Endothelial cell of umbilical vein (primary cell): ENCODE measurements at regions of chr17 and their contacts with region 1.

Region 1: GRCh38 chr17:55513885-55514591 is 2.8 kb upstream of the SMIM36 start:
- DNase-seq: peak; percentile 73
- H3K4me3 ChIP-seq: no peak overlapping the region
- H3K27ac ChIP-seq: no peak overlapping the region
- H3K4me1 ChIP-seq: no peaks in the 10 kb centered on the region
- H3K27me3 ChIP-seq: peaks cover 1 to 19% of the 10 kb centered on the region in 2 experiments
- CTCF ChIP-seq: peak; percentile 77 to 82
- POLR2A ChIP-seq: no peak

Region 2: DNA sequence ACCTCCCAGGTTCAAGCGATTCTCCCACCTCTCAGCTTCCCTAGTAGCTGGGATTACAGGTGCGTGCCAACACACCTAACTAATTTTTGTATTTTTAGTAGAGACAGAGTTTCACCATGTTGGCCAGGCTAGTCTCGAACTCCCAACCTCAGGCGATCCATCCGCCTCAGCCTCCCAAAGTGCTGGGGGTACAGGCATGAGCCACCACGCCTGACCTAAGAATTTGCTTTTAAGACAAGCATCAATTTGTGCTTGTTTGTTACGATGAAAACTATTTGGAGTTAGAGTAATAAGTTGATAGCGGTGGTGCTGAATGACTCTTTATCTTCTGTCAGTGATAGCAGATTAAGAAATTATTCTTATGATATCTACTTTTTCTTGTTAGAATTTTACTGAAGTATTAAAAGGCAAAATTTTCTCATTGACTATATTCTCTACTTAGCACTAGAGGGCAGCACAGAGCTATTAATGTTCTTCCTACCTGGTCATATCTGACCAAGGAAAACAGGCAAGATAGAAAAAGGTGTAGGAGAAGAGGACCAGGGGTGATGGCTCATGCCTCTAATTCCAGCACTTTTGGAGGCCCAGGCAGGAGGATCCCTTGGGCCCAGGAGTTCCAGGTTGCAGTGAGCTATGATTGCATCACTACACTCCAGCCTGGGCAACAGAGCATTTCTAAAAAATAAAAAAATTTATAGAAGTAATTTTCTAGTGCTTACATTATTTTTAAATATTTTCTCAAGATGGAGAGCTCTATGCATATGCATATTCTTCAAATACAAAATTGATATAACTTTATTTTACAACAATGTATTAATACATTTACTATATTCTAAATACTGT is 521.0 kb before region 1 on chr17:
- CTCF ChIA-PET with region 1: interaction called, 6 read pairs
- POLR2A ChIA-PET with region 1: no interaction called
- dilution Hi-C with region 1: no loop called
- intact Hi-C with region 1: loop called (anchors 1 kb)
- DNase-seq: peak; percentile 43
- H3K4me3 ChIP-seq: no peak overlapping the region
- H3K27ac ChIP-seq: no peak overlapping the region
- H3K4me1 ChIP-seq: no peaks in the 10 kb centered on the region
- H3K27me3 ChIP-seq: no peaks in the 10 kb centered on the region
- CTCF ChIP-seq: peak; percentile 39 to 40
- POLR2A ChIP-seq: no peak

Region 3: DNA sequence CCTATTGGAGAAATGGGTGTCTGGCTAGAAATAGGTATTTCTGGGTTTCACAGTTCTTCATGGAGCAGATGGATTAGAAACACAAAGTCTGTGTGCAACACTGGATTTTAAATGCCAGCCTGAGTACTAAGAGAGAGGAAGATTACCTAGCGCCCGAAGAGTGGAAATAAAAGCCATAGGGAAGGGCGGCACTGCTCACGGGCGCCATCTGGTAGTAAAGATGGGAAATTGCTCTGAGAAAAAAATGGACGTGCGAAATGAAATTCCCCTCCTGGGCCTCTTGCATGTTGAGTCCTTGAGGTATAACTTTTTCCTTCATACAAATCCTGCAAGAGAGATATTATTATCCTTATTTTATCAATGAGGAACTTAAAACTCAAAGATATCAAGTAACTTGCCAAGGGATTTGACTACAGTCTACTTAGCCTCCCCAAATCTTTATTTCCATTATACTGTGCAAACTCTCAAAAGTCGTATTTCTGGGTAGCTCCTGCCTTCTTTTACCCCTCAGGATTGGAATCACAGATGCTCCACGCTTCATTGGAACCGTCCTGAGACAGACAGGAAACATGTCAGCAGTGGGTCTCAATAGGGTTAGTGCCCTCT is 165.2 kb before region 1 on chr17:
- CTCF ChIA-PET with region 1: interaction called, 82 read pairs
- POLR2A ChIA-PET with region 1: no interaction called
- dilution Hi-C with region 1: loop called (anchors 10 kb)
- intact Hi-C with region 1: loop called (anchors 2 kb)
- DNase-seq: peak; percentile 56
- H3K4me3 ChIP-seq: no peak overlapping the region
- H3K27ac ChIP-seq: no peak overlapping the region
- H3K4me1 ChIP-seq: no peaks in the 10 kb centered on the region
- H3K27me3 ChIP-seq: peaks cover 6 to 7% of the 10 kb centered on the region in 2 experiments
- CTCF ChIP-seq: peak; percentile 62 to 84
- POLR2A ChIP-seq: no peak

Region 4: DNA sequence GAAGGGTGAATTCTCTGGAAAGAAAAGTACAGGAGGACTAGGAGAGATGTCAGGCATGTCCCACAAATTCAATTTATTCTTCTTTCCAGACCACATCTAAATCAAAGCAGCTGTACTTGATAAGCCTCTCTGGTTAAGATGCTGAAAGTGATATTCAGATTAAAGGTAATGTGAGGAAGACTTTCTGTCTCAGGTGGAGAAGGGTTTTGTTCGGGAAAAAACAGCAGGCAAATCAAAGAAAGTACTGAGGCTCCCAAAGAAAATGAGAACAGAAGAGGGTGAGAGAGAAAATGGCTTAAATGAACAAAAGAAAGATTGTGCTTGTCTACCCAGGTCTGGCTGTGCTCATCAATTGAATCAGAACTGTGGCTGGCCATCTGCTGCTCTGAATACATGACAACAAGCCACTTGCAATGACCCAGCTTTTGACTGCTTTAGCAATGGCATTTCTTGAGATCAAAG is 148.0 kb before region 1 on chr17:
- CTCF ChIA-PET with region 1: interaction called, 10 read pairs
- POLR2A ChIA-PET with region 1: no interaction called
- dilution Hi-C with region 1: no loop called
- intact Hi-C with region 1: no loop called
- DNase-seq: no peak
- H3K4me3 ChIP-seq: no peak overlapping the region
- H3K27ac ChIP-seq: no peak overlapping the region
- H3K4me1 ChIP-seq: no peaks in the 10 kb centered on the region
- H3K27me3 ChIP-seq: peaks cover 3 to 4% of the 10 kb centered on the region in 2 experiments
- CTCF ChIP-seq: no peak
- POLR2A ChIP-seq: no peak

Region 5: DNA sequence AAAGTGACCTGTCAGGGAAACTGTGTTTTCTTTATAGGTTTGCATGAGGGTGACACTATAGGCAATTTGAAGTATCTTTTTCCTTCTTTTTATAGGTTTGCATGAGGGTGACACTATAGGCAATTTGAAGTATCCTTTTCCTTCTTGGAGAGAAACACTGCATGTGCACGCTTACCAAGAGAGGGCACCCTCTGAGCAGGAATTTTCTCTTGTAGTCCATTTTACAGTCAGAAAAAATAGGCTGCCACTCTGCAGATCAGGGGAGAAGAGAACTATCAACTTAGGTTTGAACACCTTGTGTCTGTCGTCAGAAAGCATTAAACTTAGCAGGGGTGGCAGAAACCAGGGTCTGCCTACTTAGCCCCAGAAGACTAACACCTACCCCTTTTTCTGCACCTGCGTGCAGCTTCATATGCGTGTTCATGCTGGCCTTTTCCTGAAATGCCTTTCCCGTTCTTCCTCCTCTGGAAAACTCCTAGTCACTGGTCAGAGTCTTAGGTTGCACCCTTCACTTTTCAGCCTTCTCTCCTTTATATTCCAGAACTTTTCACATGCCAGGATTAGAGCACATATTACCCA is 13.6 kb after region 1 on chr17:
- CTCF ChIA-PET with region 1: interaction called, 24 read pairs
- POLR2A ChIA-PET with region 1: no interaction called
- dilution Hi-C with region 1: no loop called
- intact Hi-C with region 1: no loop called
- DNase-seq: peak; percentile 71
- H3K4me3 ChIP-seq: no peak overlapping the region
- H3K27ac ChIP-seq: no peak overlapping the region
- H3K4me1 ChIP-seq: no peaks in the 10 kb centered on the region
- H3K27me3 ChIP-seq: peaks cover 0 to 3% of the 10 kb centered on the region in 2 experiments
- CTCF ChIP-seq: peak; percentile 48 to 69
- POLR2A ChIP-seq: no peak

Region 6: GRCh38 chr17:55584050-55584685 is 70.1 kb after region 1 on chr17:
- CTCF ChIA-PET with region 1: no interaction called
- POLR2A ChIA-PET with region 1: no interaction called
- dilution Hi-C with region 1: no loop called
- intact Hi-C with region 1: no loop called
- DNase-seq: peak; percentile 71
- H3K4me3 ChIP-seq: no peak overlapping the region
- H3K27ac ChIP-seq: no peak overlapping the region
- H3K4me1 ChIP-seq: peaks cover 9% of the 10 kb centered on the region
- H3K27me3 ChIP-seq: peaks cover 0 to 2% of the 10 kb centered on the region in 2 experiments
- CTCF ChIP-seq: no peak
- POLR2A ChIP-seq: no peak